RWPE1 (cell line): ENCODE measurements at regions of chr6 and their contacts with region 1.

Region 1: GRCh38 chr6:37051138-37052026 is 45.9 kb downstream of the FGD2 start:
- DNase-seq: peak; percentile 70
- H3K27ac ChIP-seq: no peak overlapping the region
- CTCF ChIP-seq: peak; percentile 87

Region 2: DNA sequence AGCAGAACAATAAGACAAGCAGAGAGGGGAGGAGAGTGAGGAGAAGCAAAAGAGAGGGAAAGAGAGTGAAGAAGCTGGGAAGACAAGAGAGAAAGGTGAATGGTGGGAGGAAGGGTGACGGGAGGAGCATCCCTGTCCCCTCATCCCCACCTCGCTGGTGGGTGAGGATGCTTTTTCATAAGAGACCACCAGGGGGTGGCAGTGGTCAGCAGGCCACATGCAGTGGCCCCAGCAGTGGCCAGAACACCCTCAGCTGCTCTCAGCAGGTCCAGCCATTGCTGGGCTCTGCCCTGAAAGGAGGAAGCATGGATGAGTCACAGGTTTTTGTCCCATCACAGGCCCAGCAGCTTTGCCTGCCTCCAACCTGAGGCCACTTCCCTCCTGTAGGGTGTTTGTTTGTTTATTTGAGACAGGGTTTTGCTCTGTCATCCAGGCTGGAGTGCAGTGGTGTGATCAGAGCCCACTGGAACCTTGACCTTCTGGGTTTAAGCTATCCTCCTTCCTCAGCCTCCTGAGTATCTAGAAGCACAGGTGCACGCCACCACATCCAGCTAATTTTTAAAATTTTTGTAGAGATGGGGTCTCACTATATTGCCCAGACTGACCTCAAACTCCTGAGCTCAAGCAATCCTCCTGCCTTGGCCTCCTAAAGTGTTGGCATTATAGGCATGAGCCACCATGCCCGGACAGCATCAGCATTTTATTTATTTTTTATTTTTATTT is 22.0 kb before region 1 on chr6:
- CTCF ChIA-PET with region 1: interaction called, 10 read pairs
- POLR2A ChIA-PET with region 1: no interaction called
- DNase-seq: no peak
- H3K27ac ChIP-seq: peak overlapping the region; percentile 11; the same call in 1 of the 2 replicates
- CTCF ChIP-seq: peak; percentile 24; the same call in 1 of the 2 replicates

Region 3: GRCh38 chr6:37207903-37208456 is 156.6 kb after region 1 on chr6:
- CTCF ChIA-PET with region 1: interaction called, 15 read pairs
- POLR2A ChIA-PET with region 1: interaction called, 7 read pairs
- DNase-seq: peak; percentile 71
- H3K27ac ChIP-seq: no peak overlapping the region
- CTCF ChIP-seq: peak; percentile 76